ENCODE measurements at regions of chr1 and their contacts with region 1.

Region 1: GRCh38 chr1:209755926-209756614 is at the start of gene TRAF3IP3:
- DNase-seq: peak; percentile 88
- H3K4me3 Mint-ChIP-seq: peak within 1 kb of the TSS; percentile 97
- H3K27ac Mint-ChIP-seq: peak within 1 kb of the TSS; percentile 96
- H3K4me1 Mint-ChIP-seq: peaks cover 75% of the 10 kb centered on the region
- H3K27me3 Mint-ChIP-seq: no peaks in the 10 kb centered on the region
- total RNA-seq, gene TRAF3IP3: 421 to 422 TPM

Region 2: GRCh38 chr1:209674957-209675564 is 81.0 kb before region 1 on chr1 and contains the start of gene G0S2:
- CTCF ChIA-PET with region 1: no interaction called
- POLR2A ChIA-PET with region 1: interaction called, 11 read pairs
- DNase-seq: peak; percentile 50
- H3K4me3 Mint-ChIP-seq: peak within 1 kb of the TSS; percentile 65
- H3K27ac Mint-ChIP-seq: peak within 1 kb of the TSS; percentile 80
- H3K4me1 Mint-ChIP-seq: peaks cover 73% of the 10 kb centered on the region
- H3K27me3 Mint-ChIP-seq: peaks cover 28% of the 10 kb centered on the region
- total RNA-seq, gene G0S2: 7.3 to 7.6 TPM

Region 3: GRCh38 chr1:209704584-209704983 is 51.5 kb before region 1 on chr1 and contains the start of gene HSD11B1:
- CTCF ChIA-PET with region 1: no interaction called
- POLR2A ChIA-PET with region 1: no interaction called
- DNase-seq: no peak
- H3K4me3 Mint-ChIP-seq: no peak within 1 kb of the TSS
- H3K27ac Mint-ChIP-seq: peak within 1 kb of the TSS; percentile 11
- H3K4me1 Mint-ChIP-seq: peaks cover 61% of the 10 kb centered on the region
- H3K27me3 Mint-ChIP-seq: peaks cover 2% of the 10 kb centered on the region
- total RNA-seq, gene HSD11B1: 8.7 to 11.4 TPM

Region 4: GRCh38 chr1:209769171-209769904 is 13.3 kb after region 1 on chr1:
- CTCF ChIA-PET with region 1: interaction called, 115 read pairs
- POLR2A ChIA-PET with region 1: interaction called, 799 read pairs
- DNase-seq: peak; percentile 87
- H3K4me3 Mint-ChIP-seq: no peak overlapping the region
- H3K27ac Mint-ChIP-seq: no peak overlapping the region
- H3K4me1 Mint-ChIP-seq: peaks cover 37% of the 10 kb centered on the region
- H3K27me3 Mint-ChIP-seq: no peaks in the 10 kb centered on the region

Region 5: DNA sequence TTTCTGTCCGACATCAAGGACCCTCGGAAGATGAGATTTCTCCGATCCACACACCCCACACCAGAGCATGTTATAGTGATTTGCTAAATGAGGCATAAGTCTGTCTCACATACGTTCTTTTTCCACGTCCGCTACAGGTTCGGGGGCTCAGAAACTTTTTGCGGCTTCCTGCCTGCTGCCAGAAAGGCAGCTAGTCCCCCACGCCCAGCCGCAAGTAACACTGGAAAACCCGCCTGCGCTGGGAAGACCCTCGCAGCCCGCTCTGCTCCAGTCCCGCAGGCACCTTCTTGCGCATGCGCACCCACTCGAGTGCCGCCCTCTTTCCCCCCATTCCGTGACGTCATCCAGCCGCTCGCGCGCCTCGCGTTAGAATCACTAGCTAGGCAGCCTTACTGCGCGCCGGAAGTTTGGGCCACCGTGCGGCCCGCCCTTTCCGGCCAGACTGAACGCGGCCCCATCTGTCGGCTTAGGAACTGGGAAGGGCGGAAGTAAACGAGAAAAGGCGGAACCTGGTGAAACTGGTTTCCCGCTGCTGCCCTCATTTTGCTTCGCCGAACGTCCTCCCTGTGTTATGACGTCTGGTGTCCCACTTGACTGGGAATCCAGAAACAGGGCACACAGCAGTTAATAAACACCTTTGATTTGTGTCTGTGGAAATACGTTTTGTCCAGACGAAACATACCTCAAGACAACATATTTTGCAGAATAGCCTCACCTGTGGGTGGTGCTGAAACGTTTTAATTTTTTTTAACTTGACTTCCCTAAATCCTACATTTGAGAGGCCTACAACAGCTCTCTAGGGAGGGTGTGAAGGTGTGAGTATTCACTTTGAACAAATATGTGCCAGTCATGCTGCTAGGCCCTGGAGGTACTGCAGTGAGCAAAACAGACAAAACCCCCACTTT is 28.4 kb after region 1 on chr1 and contains the start of gene C1orf74:
- CTCF ChIA-PET with region 1: interaction called, 3 read pairs
- POLR2A ChIA-PET with region 1: interaction called, 799 read pairs
- DNase-seq: peak; percentile 99
- H3K4me3 Mint-ChIP-seq: peak within 1 kb of the TSS; percentile 90
- H3K27ac Mint-ChIP-seq: peak within 1 kb of the TSS; percentile 91
- H3K4me1 Mint-ChIP-seq: peaks cover 61% of the 10 kb centered on the region
- H3K27me3 Mint-ChIP-seq: no peaks in the 10 kb centered on the region
- total RNA-seq, gene C1orf74: 2.1 to 2.2 TPM

Region 6: GRCh38 chr1:210010161-210010560 is 254.1 kb after region 1 on chr1:
- CTCF ChIA-PET with region 1: no interaction called
- POLR2A ChIA-PET with region 1: no interaction called
- DNase-seq: no peak
- H3K4me3 Mint-ChIP-seq: no peak overlapping the region
- H3K27ac Mint-ChIP-seq: no peak overlapping the region
- H3K4me1 Mint-ChIP-seq: no peaks in the 10 kb centered on the region
- H3K27me3 Mint-ChIP-seq: no peaks in the 10 kb centered on the region